ENCODE measurements at regions of chr5 and their contacts with region 1.

Region 1: GRCh38 chr5:143435210-143435657 is 31.7 kb upstream of the NR3C1 start:
- DNase-seq: peak; percentile 98
- ATAC-seq: peak; percentile 81
- H3K4me3 ChIP-seq: peak overlapping the region; percentile 49; the same call in 1 of the 2 replicates
- H3K27ac ChIP-seq: peak overlapping the region; percentile 89
- H3K4me1 ChIP-seq: peaks cover 16% of the 10 kb centered on the region
- H3K27me3 ChIP-seq: no peaks in the 10 kb centered on the region
- CTCF ChIP-seq: no peak
- EP300 ChIP-seq: peak; percentile 88 to 96
- POLR2A ChIP-seq: 0 out of 2 replicates have a peak, but pooled peaks have one; percentile 33
- RAD21 ChIP-seq: peak; percentile 42; the same call in 1 of the 2 replicates

Region 2: GRCh38 chr5:143222287-143223231 is 212.7 kb before region 1 on chr5:
- CTCF ChIA-PET with region 1: no interaction called
- POLR2A ChIA-PET with region 1: interaction called, 3 read pairs
- RAD21 ChIA-PET with region 1: interaction called, 10 read pairs
- SMC1A ChIA-PET with region 1: interaction called, 10 read pairs
- in situ Hi-C with region 1: no loop called
- intact Hi-C with region 1: no loop called
- DNase-seq: peak; percentile 82
- ATAC-seq: peak; percentile 70
- H3K4me3 ChIP-seq: no peak overlapping the region
- H3K27ac ChIP-seq: peak overlapping the region; percentile 100
- H3K4me1 ChIP-seq: peaks cover 60% of the 10 kb centered on the region
- H3K27me3 ChIP-seq: no peaks in the 10 kb centered on the region
- CTCF ChIP-seq: no peak
- EP300 ChIP-seq: 0 out of 4 replicates have a peak, but pooled peaks of 1 of the 2 experiments have one; percentile 50
- POLR2A ChIP-seq: peak; percentile 50; the same call in 1 of the 2 replicates
- RAD21 ChIP-seq: no peak; the same call in 1 of the 2 replicates

Region 3: GRCh38 chr5:143395638-143396352 is 39.4 kb before region 1 on chr5:
- CTCF ChIA-PET with region 1: interaction called, 9 read pairs
- POLR2A ChIA-PET with region 1: interaction called, 17 read pairs
- RAD21 ChIA-PET with region 1: interaction called, 26 read pairs
- SMC1A ChIA-PET with region 1: interaction called, 36 read pairs
- in situ Hi-C with region 1: no loop called
- intact Hi-C with region 1: no loop called
- DNase-seq: no peak
- ATAC-seq: peak; percentile 17
- H3K4me3 ChIP-seq: peak overlapping the region; percentile 83
- H3K27ac ChIP-seq: peak overlapping the region; percentile 93
- H3K4me1 ChIP-seq: no peaks in the 10 kb centered on the region
- H3K27me3 ChIP-seq: no peaks in the 10 kb centered on the region
- CTCF ChIP-seq: no peak
- EP300 ChIP-seq: peak; percentile 24 to 31; a peak in 1 of 4 replicates
- POLR2A ChIP-seq: no peak
- RAD21 ChIP-seq: no peak

Region 4: GRCh38 chr5:143448518-143448917 is 13.3 kb after region 1 on chr5:
- CTCF ChIA-PET with region 1: interaction called, 9 read pairs
- POLR2A ChIA-PET with region 1: interaction called, 27 read pairs
- RAD21 ChIA-PET with region 1: interaction called, 19 read pairs
- SMC1A ChIA-PET with region 1: interaction called, 11 read pairs
- in situ Hi-C with region 1: no loop called
- intact Hi-C with region 1: no loop called
- DNase-seq: no peak
- ATAC-seq: peak; percentile 81
- H3K4me3 ChIP-seq: no peak overlapping the region
- H3K27ac ChIP-seq: no peak overlapping the region
- H3K4me1 ChIP-seq: no peaks in the 10 kb centered on the region
- H3K27me3 ChIP-seq: no peaks in the 10 kb centered on the region
- CTCF ChIP-seq: 0 out of 6 replicates have a peak, but pooled peaks of 1 of the 3 experiments have one; percentile 4
- EP300 ChIP-seq: no peak
- POLR2A ChIP-seq: no peak
- RAD21 ChIP-seq: peak; percentile 30; the same call in 1 of the 2 replicates

Region 5: DNA sequence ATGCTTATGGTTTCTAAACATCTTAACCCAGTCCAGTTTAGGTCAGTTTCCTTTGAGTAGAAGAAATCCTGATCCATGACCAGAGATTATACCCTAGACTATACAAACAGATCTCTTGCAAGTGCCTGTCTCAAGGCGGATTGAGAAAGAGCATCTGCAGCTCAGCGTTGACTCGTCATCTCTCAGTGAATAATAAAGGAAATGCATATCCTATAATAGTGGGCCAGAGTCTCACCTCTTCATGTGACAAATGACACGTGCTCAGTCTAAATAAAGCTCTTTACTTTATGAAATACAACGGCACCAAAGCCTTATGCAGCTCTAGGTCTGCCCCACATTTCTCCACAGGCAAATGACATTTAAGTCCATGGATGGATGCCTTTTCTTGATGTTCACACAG is 147.6 kb after region 1 on chr5:
- CTCF ChIA-PET with region 1: interaction called, 4 read pairs
- POLR2A ChIA-PET with region 1: interaction called, 3 read pairs
- RAD21 ChIA-PET with region 1: interaction called, 16 read pairs
- SMC1A ChIA-PET with region 1: interaction called, 4 read pairs
- in situ Hi-C with region 1: no loop called
- intact Hi-C with region 1: no loop called
- DNase-seq: no peak
- ATAC-seq: peak; percentile 81
- H3K4me3 ChIP-seq: no peak overlapping the region
- H3K27ac ChIP-seq: no peak overlapping the region
- H3K4me1 ChIP-seq: peaks cover 7% of the 10 kb centered on the region
- H3K27me3 ChIP-seq: no peaks in the 10 kb centered on the region
- CTCF ChIP-seq: no peak
- EP300 ChIP-seq: no peak
- POLR2A ChIP-seq: no peak
- RAD21 ChIP-seq: 0 out of 2 replicates have a peak, but pooled peaks have one; percentile 2

Region 6: DNA sequence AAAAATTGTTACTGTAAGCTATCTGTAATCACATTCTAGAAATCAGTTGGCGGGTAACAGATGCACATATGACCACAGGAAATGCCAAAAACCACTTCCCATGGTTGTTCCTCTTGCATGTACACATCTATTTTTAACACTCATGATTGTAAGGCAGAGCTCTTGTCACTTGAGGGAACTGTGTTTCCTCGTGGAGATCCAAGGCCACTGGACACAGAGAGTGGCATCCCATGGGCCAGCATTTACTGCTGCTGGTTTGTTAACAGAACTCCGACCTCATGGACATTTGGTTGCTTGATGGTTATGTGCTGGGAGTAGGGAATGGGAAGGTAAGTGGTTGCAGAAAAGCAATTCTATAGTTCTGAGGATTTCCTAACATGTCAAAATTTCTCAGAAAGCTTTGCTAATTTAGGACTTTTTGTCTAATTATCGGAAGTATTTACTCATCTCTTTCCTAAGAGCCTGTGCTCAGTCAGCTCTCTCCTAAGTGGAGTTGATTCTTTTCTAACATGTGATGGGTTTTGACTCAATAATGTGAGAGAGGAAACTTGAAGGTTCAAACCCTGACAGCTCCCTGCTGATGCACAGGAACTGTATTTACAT is 170.3 kb after region 1 on chr5:
- CTCF ChIA-PET with region 1: no interaction called
- POLR2A ChIA-PET with region 1: interaction called, 3 read pairs
- RAD21 ChIA-PET with region 1: interaction called, 7 read pairs
- SMC1A ChIA-PET with region 1: interaction called, 8 read pairs
- in situ Hi-C with region 1: no loop called
- intact Hi-C with region 1: loop called (anchors 1 kb)
- DNase-seq: peak; percentile 60
- ATAC-seq: peak; percentile 68
- H3K4me3 ChIP-seq: no peak overlapping the region; the same call in 1 of the 2 replicates
- H3K27ac ChIP-seq: peak overlapping the region; percentile 69
- H3K4me1 ChIP-seq: peaks cover 22% of the 10 kb centered on the region
- H3K27me3 ChIP-seq: no peaks in the 10 kb centered on the region
- CTCF ChIP-seq: no peak
- EP300 ChIP-seq: peak in 1 of 2 experiments; percentile 40; a peak in 2 of 4 replicates
- POLR2A ChIP-seq: no peak
- RAD21 ChIP-seq: 0 out of 2 replicates have a peak, but pooled peaks have one; percentile 9

Region 7: DNA sequence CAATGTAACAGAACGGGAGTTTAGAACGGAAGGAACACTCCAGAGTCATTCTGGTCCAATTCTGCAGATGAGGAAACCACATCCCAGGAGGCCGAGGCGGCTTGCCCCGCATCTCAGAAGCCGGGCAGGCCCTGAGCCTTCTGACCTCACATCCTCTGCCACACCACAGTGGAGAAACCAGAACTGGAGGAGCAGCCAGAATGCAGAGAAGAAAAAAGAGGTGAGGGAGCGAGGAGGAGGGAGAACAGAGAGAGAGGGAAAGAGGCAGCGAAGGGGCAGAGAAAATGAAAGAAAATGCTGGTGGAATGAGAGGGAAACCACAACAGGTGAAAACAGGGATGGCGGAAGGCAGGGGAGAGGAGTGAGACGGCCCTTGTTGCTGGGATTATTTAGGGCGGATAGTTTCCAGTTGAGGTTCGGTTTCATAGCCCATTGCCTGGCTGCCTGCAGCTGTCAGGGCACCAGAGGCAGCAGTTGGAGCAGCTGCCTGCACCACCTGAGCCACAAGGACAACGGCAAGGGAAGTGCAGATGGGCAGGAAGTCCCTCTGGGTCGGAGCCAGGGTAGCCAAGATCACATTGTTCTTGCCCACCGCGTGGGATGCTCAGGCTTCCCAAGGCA is 377.0 kb after region 1 on chr5 and contains the start of gene HMHB1:
- CTCF ChIA-PET with region 1: no interaction called
- POLR2A ChIA-PET with region 1: interaction called, 3 read pairs
- RAD21 ChIA-PET with region 1: no interaction called
- SMC1A ChIA-PET with region 1: no interaction called
- in situ Hi-C with region 1: no loop called
- intact Hi-C with region 1: loop called (anchors 5 kb)
- DNase-seq: no peak
- ATAC-seq: peak; percentile 80
- H3K4me3 ChIP-seq: peak within 1 kb of the TSS; percentile 31
- H3K27ac ChIP-seq: peak within 1 kb of the TSS; percentile 49
- H3K4me1 ChIP-seq: peaks cover 7% of the 10 kb centered on the region; the same call in 1 of the 2 replicates
- H3K27me3 ChIP-seq: no peaks in the 10 kb centered on the region
- CTCF ChIP-seq: no peak
- EP300 ChIP-seq: no peak
- POLR2A ChIP-seq: no peak
- RAD21 ChIP-seq: no peak
- polyA plus RNA-seq, gene HMHB1: 16.0 to 20.3 TPM